A549 (cell line): ENCODE measurements at regions of chr14 and their contacts with region 1.

Region 1: DNA sequence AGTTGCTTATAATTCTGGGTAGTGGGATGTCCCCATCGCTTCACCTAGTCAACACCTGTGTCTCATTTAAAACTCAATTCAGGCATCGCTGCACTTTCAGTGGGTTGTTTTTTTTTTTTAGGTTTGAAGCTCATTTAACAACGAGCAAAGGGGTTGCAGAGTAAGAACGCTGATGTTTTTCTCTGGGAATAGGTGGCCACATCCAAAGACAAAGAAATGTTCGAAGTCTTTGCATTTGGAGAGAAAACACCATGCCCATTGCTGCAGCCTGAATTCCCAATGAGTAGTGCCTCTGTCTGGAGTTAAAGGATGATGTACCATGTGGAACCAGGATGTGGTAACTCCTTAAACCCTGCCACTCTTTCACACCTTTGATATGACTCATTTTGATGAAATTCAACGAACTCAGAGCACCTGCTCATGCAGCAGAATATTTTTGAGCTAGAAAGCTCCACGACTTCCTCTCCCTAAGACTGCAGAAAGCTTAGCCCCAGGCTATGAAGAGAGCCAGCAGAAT is 35.1 kb upstream of the BATF start:
- DNase-seq: no peak
- ATAC-seq: no peak
- H3K4me3 ChIP-seq: no peak overlapping the region
- H3K27ac ChIP-seq: peak overlapping the region in 1 of 2 experiments; percentile 4; a peak in 1 of 6 replicates
- H3K4me1 ChIP-seq: peaks cover 8% of the 10 kb centered on the region; the same call in 2 of the 3 replicates
- CTCF ChIP-seq: no peak
- EP300 ChIP-seq: no peak
- POLR2A ChIP-seq: no peak
- RAD21 ChIP-seq: no peak

Region 2: DNA sequence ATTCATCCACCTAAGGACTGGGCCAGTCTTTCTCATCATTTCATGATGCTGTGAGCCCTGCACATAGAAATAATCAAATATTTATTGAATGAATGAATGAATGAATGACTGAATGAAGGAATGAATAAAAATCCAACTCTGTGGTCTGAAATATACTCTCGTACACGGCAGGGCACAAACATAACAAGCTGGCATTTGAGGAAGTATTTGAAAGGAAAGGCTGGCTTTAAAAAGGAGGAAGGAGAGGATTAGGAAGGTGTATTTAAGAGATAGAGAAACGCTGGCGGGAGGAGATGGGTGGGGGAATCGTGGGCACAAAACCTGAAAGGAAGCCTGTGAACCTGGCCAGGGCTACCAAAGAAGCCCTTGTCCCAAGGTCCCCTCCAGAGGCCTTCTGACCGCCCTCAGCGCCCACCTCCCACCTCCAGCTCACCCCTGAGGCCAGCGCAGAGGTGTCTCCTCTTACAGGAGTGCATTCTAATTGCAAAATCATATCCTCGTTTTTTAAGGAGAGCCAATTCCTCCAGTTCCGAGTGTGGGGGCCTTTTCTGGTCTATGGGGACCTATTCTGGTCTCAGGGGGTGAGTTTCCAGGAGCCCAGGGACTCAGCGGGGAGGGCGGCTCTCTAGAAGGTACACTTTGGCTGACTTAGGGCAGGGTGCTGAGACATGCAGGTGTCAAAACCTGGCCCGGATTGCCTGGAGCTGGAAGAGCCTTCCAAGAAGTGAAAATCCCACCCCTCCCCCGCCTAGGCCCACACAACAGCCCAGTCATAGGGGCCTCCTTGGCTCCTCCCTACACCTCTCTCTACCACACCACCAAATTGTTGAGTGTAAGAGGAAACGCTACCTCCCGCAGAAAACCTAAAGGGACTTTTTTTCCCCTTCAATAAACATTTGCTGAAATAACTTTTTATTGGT is 68.1 kb before region 1 on chr14:
- CTCF ChIA-PET with region 1: interaction called, 12 read pairs
- POLR2A ChIA-PET with region 1: no interaction called
- DNase-seq: peak in 1 of 2 experiments; percentile 46
- ATAC-seq: peak; percentile 36 to 62; a peak in 3 of 6 replicates
- H3K4me3 ChIP-seq: no peak overlapping the region
- H3K27ac ChIP-seq: peak overlapping the region; percentile 63 to 80
- H3K4me1 ChIP-seq: peaks cover 30% of the 10 kb centered on the region
- CTCF ChIP-seq: no peak
- EP300 ChIP-seq: no peak
- POLR2A ChIP-seq: no peak
- RAD21 ChIP-seq: no peak

Region 3: GRCh38 chr14:75452900-75453747 is 34.1 kb before region 1 on chr14:
- CTCF ChIA-PET with region 1: interaction called, 12 read pairs
- POLR2A ChIA-PET with region 1: no interaction called
- DNase-seq: peak; percentile 56 to 80
- ATAC-seq: peak; percentile 69 to 84
- H3K4me3 ChIP-seq: 0 out of 3 replicates have a peak overlapping the region, but pooled peaks have one; percentile 6
- H3K27ac ChIP-seq: peak overlapping the region; percentile 73 to 87
- H3K4me1 ChIP-seq: peaks cover 82% of the 10 kb centered on the region
- CTCF ChIP-seq: no peak
- EP300 ChIP-seq: peak in 1 of 2 experiments; percentile 66; a peak in 1 of 5 replicates
- POLR2A ChIP-seq: no peak
- RAD21 ChIP-seq: no peak; a peak in 1 of 5 replicates

Region 4: DNA sequence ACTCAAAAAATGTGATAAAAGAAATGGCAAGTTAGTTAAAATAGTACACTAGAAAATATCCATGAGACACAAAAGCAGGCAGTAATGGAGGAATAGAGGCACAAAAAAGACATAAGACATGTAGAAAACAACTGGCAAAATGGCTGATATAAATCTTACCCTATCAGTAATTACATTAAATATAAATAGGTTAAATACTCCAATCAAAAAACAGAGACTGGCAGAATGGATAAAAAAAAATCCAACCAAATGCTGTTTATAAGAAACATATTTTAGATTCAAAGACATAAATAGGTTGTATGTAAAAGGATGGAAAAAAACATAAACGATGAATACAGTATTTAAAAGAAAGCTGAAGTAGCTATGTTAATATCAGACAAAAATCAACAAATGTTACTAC is 19.7 kb after region 1 on chr14:
- CTCF ChIA-PET with region 1: interaction called, 22 read pairs
- POLR2A ChIA-PET with region 1: no interaction called
- DNase-seq: no peak
- ATAC-seq: no peak
- H3K4me3 ChIP-seq: no peak overlapping the region
- H3K27ac ChIP-seq: no peak overlapping the region
- H3K4me1 ChIP-seq: no peaks in the 10 kb centered on the region
- CTCF ChIP-seq: no peak
- EP300 ChIP-seq: no peak
- POLR2A ChIP-seq: no peak
- RAD21 ChIP-seq: no peak

Region 5: GRCh38 chr14:75554487-75554886 is 67.3 kb after region 1 on chr14:
- CTCF ChIA-PET with region 1: interaction called, 171 read pairs
- POLR2A ChIA-PET with region 1: no interaction called
- DNase-seq: no peak
- ATAC-seq: peak; percentile 45 to 64; a peak in 3 of 6 replicates
- H3K4me3 ChIP-seq: no peak overlapping the region
- H3K27ac ChIP-seq: peak overlapping the region; percentile 59 to 66
- H3K4me1 ChIP-seq: peaks cover 32% of the 10 kb centered on the region
- CTCF ChIP-seq: no peak
- EP300 ChIP-seq: no peak
- POLR2A ChIP-seq: no peak
- RAD21 ChIP-seq: no peak